ENCODE measurements at regions of chr4 and their contacts with region 1.

Region 1: DNA sequence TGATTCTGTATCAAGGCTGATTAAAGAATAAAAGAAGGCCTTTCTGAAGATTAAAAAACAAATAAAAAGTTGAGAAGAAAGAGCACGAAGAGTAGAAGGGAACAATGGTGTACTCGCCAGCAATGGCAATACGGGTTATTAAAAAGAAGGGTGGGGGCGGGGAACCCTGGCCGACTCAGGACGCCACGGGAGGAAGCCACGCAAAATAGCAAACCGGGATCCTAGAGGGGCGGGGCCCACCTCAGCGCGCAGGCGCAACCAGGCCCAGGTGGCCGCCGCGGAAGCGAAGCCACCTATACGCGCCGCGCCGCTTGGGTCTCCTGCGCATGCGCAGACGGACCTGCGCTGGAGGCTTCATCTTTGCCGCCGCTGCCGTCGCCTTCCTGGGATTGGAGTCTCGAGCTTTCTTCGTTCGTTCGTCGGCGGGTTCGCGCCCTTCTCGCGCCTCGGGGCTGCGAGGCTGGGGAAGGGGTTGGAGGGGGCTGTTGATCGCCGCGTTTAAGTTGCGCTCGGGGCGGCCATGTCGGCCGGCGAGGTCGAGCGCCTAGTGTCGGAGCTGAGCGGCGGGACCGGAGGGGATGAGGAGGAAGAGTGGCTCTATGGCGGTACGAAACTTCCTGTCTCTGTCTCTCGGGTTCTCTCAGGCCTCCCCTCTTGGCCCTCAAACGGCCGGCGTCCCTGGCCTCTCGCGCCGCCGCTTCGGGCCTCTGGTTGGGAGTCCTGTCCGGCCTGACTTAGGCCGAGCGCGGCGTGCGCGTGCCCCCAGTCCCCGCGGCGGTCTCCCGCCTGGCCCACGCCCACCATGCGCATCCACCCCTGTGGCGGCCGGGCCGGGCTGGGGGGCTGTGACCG is at the start of gene FIP1L1:
- DNase-seq: peak; percentile 94
- H3K4me3 Mint-ChIP-seq: peak within 1 kb of the TSS; percentile 92
- H3K27ac Mint-ChIP-seq: peak within 1 kb of the TSS; percentile 96
- H3K4me1 Mint-ChIP-seq: peaks cover 46% of the 10 kb centered on the region
- H3K27me3 Mint-ChIP-seq: peaks cover 6% of the 10 kb centered on the region
- total RNA-seq, gene FIP1L1: 118 and 123 TPM in 2 replicates

Region 2: GRCh38 chr4:51842554-51843308 is 1534.8 kb before region 1 on chr4 and contains the start of gene DCUN1D4:
- intact Hi-C with region 1: loop called (anchors 2 kb)
- DNase-seq: peak; percentile 98
- H3K4me3 Mint-ChIP-seq: peak within 1 kb of the TSS; percentile 95
- H3K27ac Mint-ChIP-seq: peak within 1 kb of the TSS; percentile 98
- H3K4me1 Mint-ChIP-seq: peaks cover 21% of the 10 kb centered on the region
- H3K27me3 Mint-ChIP-seq: peaks cover 9% of the 10 kb centered on the region
- total RNA-seq, gene DCUN1D4: 29.7 and 40.7 TPM in 2 replicates

Region 3: GRCh38 chr4:52721968-52722815 is 655.4 kb before region 1 on chr4:
- intact Hi-C with region 1: loop called (anchors 1 kb)
- DNase-seq: peak; percentile 84
- H3K4me3 Mint-ChIP-seq: peak overlapping the region; percentile 80
- H3K27ac Mint-ChIP-seq: peak overlapping the region; percentile 68
- H3K4me1 Mint-ChIP-seq: peaks cover 16% of the 10 kb centered on the region
- H3K27me3 Mint-ChIP-seq: peaks cover 10% of the 10 kb centered on the region

Region 4: DNA sequence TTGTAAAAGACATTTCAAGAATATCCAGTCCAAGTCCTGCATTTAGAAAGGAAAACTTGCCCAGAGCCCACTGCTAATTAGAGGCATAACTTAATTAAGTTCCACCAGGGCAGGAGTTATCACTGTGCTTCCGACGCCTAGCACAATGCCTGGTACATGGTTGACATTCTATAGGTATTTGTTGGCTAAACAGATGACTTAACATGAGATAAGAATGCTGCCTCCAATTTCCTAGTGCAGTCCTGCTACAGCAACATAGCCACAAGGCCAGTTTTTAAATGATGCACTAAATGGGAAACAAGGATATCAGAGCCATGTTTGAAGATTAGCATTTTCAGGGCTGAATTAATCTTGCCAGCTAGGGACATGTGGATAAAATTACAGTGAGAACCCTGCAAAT is 351.3 kb before region 1 on chr4:
- intact Hi-C with region 1: loop called (anchors 5 kb)
- DNase-seq: no peak
- H3K4me3 Mint-ChIP-seq: no peak overlapping the region
- H3K27ac Mint-ChIP-seq: no peak overlapping the region
- H3K4me1 Mint-ChIP-seq: no peaks in the 10 kb centered on the region
- H3K27me3 Mint-ChIP-seq: no peaks in the 10 kb centered on the region

Region 5: GRCh38 chr4:53365486-53366300 is 11.9 kb before region 1 on chr4 and contains the start of gene SCFD2:
- intact Hi-C with region 1: loop called (anchors 1 kb)
- DNase-seq: peak; percentile 95
- H3K4me3 Mint-ChIP-seq: peak within 1 kb of the TSS; percentile 98
- H3K27ac Mint-ChIP-seq: peak within 1 kb of the TSS; percentile 88
- H3K4me1 Mint-ChIP-seq: peaks cover 39% of the 10 kb centered on the region
- H3K27me3 Mint-ChIP-seq: peaks cover 5% of the 10 kb centered on the region
- total RNA-seq, gene SCFD2: 39.4 and 40.5 TPM in 2 replicates